Caco-2 (cell line): ENCODE measurements at regions of chr1 and their contacts with region 1.

Region 1: GRCh38 chr1:153220606-153221303 is 3.4 kb downstream of the PRR9 start:
- DNase-seq: no peak
- H3K4me3 ChIP-seq: no peak overlapping the region
- H3K4me3 Mint-ChIP-seq: no peak overlapping the region
- H3K27ac Mint-ChIP-seq: no peak overlapping the region
- H3K4me1 ChIP-seq: no peaks in the 10 kb centered on the region
- H3K4me1 Mint-ChIP-seq: no peaks in the 10 kb centered on the region
- H3K27me3 ChIP-seq: no peaks in the 10 kb centered on the region; the same call in 1 of the 2 replicates
- H3K27me3 Mint-ChIP-seq: peaks cover 26% of the 10 kb centered on the region
- CTCF ChIP-seq: no peak

Region 2: DNA sequence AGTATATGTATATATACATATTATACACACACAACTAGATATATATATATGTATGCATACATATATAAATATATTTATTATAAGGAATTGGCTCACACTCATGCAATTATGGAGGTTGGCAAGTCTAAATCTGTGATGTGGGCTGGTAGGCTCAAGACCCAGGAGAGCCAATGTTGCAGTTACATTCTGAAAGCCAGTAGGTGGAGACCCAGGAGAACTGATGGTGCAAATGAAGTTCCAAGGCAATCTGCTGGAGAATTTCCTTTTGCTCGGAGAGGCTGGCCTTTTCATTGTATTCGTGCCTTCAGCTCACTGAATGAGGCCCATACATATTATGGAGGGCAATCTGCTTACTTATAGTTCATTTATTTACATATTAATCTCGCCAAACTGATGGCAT is 303.0 kb before region 1 on chr1:
- CTCF ChIA-PET with region 1: no interaction called
- POLR2A ChIA-PET with region 1: no interaction called
- intact Hi-C with region 1: loop called (anchors 1 kb)
- DNase-seq: peak in 1 of 2 experiments; percentile 23
- H3K4me3 ChIP-seq: no peak overlapping the region
- H3K4me3 Mint-ChIP-seq: no peak overlapping the region
- H3K27ac Mint-ChIP-seq: no peak overlapping the region
- H3K4me1 ChIP-seq: no peaks in the 10 kb centered on the region
- H3K4me1 Mint-ChIP-seq: no peaks in the 10 kb centered on the region
- H3K27me3 ChIP-seq: no peaks in the 10 kb centered on the region
- H3K27me3 Mint-ChIP-seq: peaks cover 26% of the 10 kb centered on the region
- CTCF ChIP-seq: peak; percentile 27 to 53

Region 3: DNA sequence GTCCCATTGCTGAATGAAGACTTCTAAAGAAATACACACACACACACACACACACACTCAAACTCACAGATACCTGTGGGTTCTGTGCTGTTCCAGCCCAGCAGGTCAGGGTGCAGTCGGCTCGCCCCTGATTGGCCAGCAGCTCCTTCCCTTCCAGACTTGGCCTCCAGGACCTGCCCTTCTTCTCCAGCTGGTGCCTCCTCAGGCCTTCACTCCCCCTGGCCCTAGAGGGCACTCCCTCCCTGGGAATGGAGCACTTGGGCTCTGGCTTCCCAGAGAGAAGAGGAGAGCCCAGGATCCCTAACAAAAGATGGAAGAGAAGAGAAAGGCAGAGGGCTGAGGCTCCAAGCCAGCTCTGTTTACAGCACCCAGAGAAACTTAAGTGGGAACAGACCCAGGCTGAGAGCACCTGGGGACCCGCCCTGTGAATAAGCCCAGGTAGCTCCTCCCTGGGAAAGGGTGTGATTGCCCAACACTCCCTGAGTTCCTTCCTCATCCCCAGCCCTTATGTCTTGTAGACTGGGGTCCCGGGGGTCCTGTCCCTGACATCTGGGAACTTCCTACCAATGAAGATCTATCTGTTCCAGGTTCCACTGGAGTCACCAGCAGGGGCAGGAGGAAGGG is 91.9 kb after region 1 on chr1 and contains the start of gene PGLYRP3:
- CTCF ChIA-PET with region 1: no interaction called
- POLR2A ChIA-PET with region 1: no interaction called
- intact Hi-C with region 1: no loop called
- DNase-seq: peak; percentile 53 to 63
- H3K4me3 ChIP-seq: no peak within 1 kb of the TSS
- H3K4me3 Mint-ChIP-seq: no peak within 1 kb of the TSS
- H3K27ac Mint-ChIP-seq: no peak within 1 kb of the TSS
- H3K4me1 ChIP-seq: no peaks in the 10 kb centered on the region
- H3K4me1 Mint-ChIP-seq: no peaks in the 10 kb centered on the region
- H3K27me3 ChIP-seq: peaks cover 1% of the 10 kb centered on the region; the same call in 1 of the 2 replicates
- H3K27me3 Mint-ChIP-seq: peaks cover 11% of the 10 kb centered on the region
- CTCF ChIP-seq: peak in 1 of 2 experiments; percentile 27
- total RNA-seq, gene PGLYRP3: not detected in 2 replicates

Region 4: GRCh38 chr1:153697191-153698019 is 476.6 kb after region 1 on chr1:
- CTCF ChIA-PET with region 1: no interaction called
- POLR2A ChIA-PET with region 1: no interaction called
- intact Hi-C with region 1: no loop called
- DNase-seq: peak; percentile 68 to 82
- H3K4me3 ChIP-seq: no peak overlapping the region
- H3K4me3 Mint-ChIP-seq: no peak overlapping the region
- H3K27ac Mint-ChIP-seq: peak overlapping the region; percentile 53
- H3K4me1 ChIP-seq: peaks cover 13% of the 10 kb centered on the region
- H3K4me1 Mint-ChIP-seq: peaks cover 10% of the 10 kb centered on the region
- H3K27me3 ChIP-seq: no peaks in the 10 kb centered on the region
- H3K27me3 Mint-ChIP-seq: no peaks in the 10 kb centered on the region
- CTCF ChIP-seq: no peak